Endothelial cell of umbilical vein (primary cell): ENCODE measurements at regions of chr14 and their contacts with region 1.

Region 1: DNA sequence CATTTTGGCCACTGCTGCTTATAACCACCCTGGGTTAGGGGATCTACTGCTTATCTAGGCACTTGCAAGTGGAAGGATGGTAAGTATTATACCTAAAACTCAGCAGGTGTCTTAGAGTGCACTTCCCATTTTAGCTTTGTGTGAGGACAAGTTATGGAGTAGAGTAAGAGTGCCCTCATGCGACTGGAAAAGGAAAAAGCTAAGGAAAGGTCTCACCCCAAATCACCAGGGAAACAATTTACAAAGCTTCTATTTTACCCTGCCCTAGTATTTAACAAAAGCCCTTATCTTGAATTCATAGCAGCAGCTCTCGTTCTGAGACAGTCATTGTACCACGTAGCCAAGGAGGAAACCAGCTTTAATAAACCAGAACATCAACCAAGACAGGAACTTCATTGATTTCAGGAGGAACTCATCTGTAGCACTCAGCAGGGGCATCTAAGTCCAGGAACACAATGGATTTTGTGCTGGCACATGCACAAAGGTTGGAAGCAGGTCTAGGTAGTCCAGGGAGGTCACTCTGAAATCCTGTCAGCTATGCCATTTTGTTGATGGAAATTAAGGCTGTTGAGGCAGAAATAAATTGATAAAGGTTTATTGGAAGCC is 2.9 kb downstream of the RDH12 start:
- DNase-seq: peak; percentile 68
- H3K4me3 ChIP-seq: no peak overlapping the region
- H3K27ac ChIP-seq: no peak overlapping the region
- H3K4me1 ChIP-seq: no peaks in the 10 kb centered on the region
- H3K27me3 ChIP-seq: peaks cover 0 to 6% of the 10 kb centered on the region in 2 experiments
- CTCF ChIP-seq: peak; percentile 52 to 61
- POLR2A ChIP-seq: no peak

Region 2: GRCh38 chr14:67420102-67420830 is 284.3 kb before region 1 on chr14:
- CTCF ChIA-PET with region 1: interaction called, 77 read pairs
- POLR2A ChIA-PET with region 1: no interaction called
- dilution Hi-C with region 1: no loop called
- intact Hi-C with region 1: no loop called
- DNase-seq: no peak
- H3K4me3 ChIP-seq: no peak overlapping the region
- H3K27ac ChIP-seq: no peak overlapping the region
- H3K4me1 ChIP-seq: peaks cover 13% of the 10 kb centered on the region
- H3K27me3 ChIP-seq: no peaks in the 10 kb centered on the region
- CTCF ChIP-seq: peak in 1 of 2 donors; percentile 21
- POLR2A ChIP-seq: no peak

Region 3: GRCh38 chr14:67526676-67527459 is 177.7 kb before region 1 on chr14:
- CTCF ChIA-PET with region 1: interaction called, 82 read pairs
- POLR2A ChIA-PET with region 1: no interaction called
- dilution Hi-C with region 1: no loop called
- intact Hi-C with region 1: loop called (anchors 1 kb)
- DNase-seq: peak; percentile 62
- H3K4me3 ChIP-seq: no peak overlapping the region
- H3K27ac ChIP-seq: no peak overlapping the region
- H3K4me1 ChIP-seq: no peaks in the 10 kb centered on the region
- H3K27me3 ChIP-seq: peaks cover 29 to 36% of the 10 kb centered on the region in 2 experiments
- CTCF ChIP-seq: peak; percentile 56 to 70
- POLR2A ChIP-seq: no peak

Region 4: GRCh38 chr14:67583711-67584644 is 120.6 kb before region 1 on chr14:
- CTCF ChIA-PET with region 1: interaction called, 394 read pairs
- POLR2A ChIA-PET with region 1: no interaction called
- dilution Hi-C with region 1: no loop called
- intact Hi-C with region 1: loop called (anchors 1 kb)
- DNase-seq: peak; percentile 53
- H3K4me3 ChIP-seq: no peak overlapping the region
- H3K27ac ChIP-seq: no peak overlapping the region
- H3K4me1 ChIP-seq: no peaks in the 10 kb centered on the region
- H3K27me3 ChIP-seq: peaks cover 0 to 2% of the 10 kb centered on the region in 2 experiments
- CTCF ChIP-seq: peak; percentile 56 to 76
- POLR2A ChIP-seq: no peak

Region 5: DNA sequence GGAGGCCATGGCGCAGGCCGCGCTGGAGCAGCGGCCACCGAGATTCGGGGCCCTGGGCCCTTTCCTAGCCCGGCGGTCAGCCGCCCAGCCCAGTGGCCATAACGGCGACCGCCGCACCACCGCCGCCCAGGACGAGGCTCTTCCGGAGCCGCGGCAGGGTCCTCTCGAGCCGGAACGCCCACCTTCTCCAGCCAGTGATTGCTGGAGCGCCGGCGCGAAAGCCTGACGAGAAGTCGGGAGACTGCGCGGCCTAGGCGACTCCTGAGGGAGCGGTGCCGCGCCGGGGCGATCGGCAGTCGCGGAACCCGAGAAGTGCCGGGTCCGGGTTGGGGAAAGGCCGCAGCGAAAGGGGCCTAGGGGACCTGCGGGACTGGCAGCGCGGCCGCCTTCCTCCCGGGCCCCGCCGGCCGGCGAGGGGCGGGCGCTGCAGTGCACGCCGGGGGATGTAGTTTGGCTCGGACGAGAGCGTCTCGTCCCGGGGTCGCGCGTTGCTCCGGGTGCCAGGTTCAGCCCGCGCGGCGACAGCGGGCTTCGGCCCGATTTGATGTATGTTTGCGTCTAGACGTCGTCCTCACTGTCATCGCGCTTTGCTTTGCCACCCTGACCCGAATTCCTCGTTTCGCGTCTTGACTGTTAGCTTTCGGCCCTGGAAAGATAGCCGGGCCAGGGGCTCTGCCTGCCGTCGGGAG is 30.0 kb before region 1 on chr14 and contains the start of gene VTI1B:
- CTCF ChIA-PET with region 1: interaction called, 181 read pairs
- POLR2A ChIA-PET with region 1: no interaction called
- dilution Hi-C with region 1: no loop called
- intact Hi-C with region 1: loop called (anchors 2 kb)
- DNase-seq: peak; percentile 88
- H3K4me3 ChIP-seq: peak within 1 kb of the TSS; percentile 88 to 99 (median 97)
- H3K27ac ChIP-seq: peak within 1 kb of the TSS; percentile 83
- H3K4me1 ChIP-seq: peaks cover 18% of the 10 kb centered on the region
- H3K27me3 ChIP-seq: no peaks in the 10 kb centered on the region
- CTCF ChIP-seq: no peak
- POLR2A ChIP-seq: peak; percentile 69
- total RNA-seq, gene VTI1B: 79.4 and 90.0 TPM in 2 replicates